ENCODE measurements at regions of chr9 and their contacts with region 1.

Region 1: GRCh38 chr9:89597711-89598625 is 6.8 kb upstream of the GADD45G start:
- DNase-seq: no peak
- ATAC-seq: peak; percentile 68

Region 2: GRCh38 chr9:90102292-90102901 is 504.4 kb after region 1 on chr9:
- intact Hi-C with region 1: loop called (anchors 2 kb)
- DNase-seq: peak; percentile 77
- ATAC-seq: peak; percentile 74

Region 3: DNA sequence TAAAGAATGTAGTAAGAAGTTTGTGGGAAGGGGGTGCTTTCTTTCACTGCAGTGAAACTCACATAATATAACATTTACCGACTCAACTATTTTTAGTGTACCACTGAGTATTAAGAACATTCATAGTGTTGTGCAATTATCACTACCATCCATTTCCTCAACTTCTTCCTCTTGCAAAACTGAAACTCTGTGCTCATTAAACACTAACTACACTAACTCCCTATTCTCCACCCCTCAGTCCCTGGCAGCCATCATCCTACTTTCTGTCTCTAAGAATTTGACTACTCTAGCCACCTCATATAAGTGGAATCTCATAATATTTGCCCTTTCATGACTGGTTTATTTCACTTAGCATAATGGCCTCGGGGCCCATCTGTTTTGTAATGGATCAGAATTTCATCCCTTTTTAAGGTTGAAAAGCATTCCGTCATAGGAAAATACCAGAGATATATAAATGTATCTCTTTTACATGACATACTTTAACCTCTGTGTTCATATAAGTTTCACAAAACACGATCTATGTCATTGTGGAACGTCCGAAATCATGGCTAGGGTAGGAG is 1101.0 kb after region 1 on chr9:
- intact Hi-C with region 1: no loop called
- DNase-seq: no peak
- ATAC-seq: no peak